K562 (cell line): ENCODE measurements at regions of chr15 and their contacts with region 1.

Region 1: DNA sequence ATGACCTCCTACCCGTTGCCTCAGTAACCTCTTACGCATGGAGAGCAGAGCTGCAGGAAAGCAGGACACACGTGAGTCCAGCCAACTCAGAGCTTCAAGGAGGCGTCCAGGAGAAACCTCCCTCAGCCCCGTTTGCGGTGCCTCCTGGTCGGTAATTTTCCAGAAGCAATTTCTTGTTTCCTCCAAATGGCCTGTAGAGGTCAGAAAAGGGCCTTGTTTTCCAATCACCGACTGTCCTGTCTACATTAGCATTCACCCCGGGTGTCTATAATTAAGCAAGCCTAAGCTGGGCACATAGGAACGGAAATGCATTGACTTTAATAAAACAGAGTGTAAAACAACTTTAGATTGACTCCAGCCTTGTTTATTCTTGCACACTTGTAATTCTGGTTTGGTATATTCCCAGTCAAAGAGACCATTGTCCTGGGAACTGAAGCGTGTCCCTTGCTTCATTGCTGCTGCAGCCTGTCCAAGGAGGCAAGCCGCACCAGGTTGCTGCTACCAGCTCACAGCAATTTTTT is 836.2 kb downstream of the AGBL1 start:
- DNase-seq: peak; percentile 7 to 22 (median 16)
- ATAC-seq: no peak; the same call in 2 of the 3 replicates
- H3K4me3 ChIP-seq: no peak overlapping the region
- H3K27ac ChIP-seq: no peak overlapping the region
- H3K4me1 ChIP-seq: no peaks in the 10 kb centered on the region
- H3K27me3 ChIP-seq: no peaks in the 10 kb centered on the region
- CTCF ChIP-seq: peak in 2 of 3 experiments; percentile 36 to 42; a peak in 2 of 6 replicates
- EP300 ChIP-seq: no peak
- POLR2A ChIP-seq: no peak
- RAD21 ChIP-seq: peak; percentile 33 to 45; a peak in 3 of 4 replicates

Region 2: DNA sequence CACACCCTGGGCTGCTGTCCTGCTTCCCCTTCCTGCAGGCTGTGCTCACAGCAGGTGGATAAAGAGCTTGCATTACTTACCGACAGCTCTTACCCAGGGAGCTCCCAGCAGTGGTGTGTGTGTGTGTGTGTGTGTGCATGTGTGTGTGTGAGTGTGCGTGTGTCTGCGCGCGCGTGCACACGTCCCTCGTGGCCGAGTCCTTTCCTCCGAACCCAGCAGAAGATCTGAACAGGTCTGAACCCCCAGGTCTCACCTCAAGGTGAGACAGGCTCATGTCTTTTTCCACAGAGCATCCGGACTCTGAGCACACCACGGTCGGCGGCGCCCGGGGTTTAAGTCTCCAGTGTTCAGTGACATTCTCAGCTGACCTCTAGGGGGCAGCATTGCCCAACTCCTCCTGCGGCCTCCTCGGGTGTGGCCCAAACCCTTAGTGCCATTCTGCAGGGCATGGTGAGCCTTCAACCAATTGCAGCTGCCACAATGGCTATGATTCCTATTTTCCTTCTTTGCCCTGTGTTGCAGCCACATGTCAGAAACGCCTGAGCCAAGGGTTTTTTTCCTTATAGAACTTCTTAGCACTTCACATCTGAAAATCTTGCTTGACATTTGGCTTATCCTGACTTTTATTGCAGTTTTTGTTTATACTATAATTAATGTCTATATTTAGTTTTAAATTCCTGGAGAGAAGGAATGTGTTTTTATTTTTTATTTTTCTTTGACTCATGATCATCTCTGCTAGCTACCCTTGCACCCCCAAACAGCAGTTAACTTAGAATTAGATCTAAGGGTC is 1057.1 kb before region 1 on chr15:
- CTCF ChIA-PET with region 1: no interaction called
- POLR2A ChIA-PET with region 1: no interaction called
- in situ Hi-C with region 1: no loop called
- intact Hi-C with region 1: loop called (anchors 10 kb)
- DNase-seq: peak; percentile 71 to 79 (median 78)
- ATAC-seq: peak; percentile 99
- H3K4me3 ChIP-seq: no peak overlapping the region
- H3K27ac ChIP-seq: no peak overlapping the region
- H3K4me1 ChIP-seq: no peaks in the 10 kb centered on the region
- H3K27me3 ChIP-seq: no peaks in the 10 kb centered on the region
- CTCF ChIP-seq: peak; percentile 74 to 78 (median 76)
- EP300 ChIP-seq: no peak
- POLR2A ChIP-seq: no peak
- RAD21 ChIP-seq: peak; percentile 27 to 73

Region 3: GRCh38 chr15:86948517-86949118 is 32.7 kb after region 1 on chr15:
- CTCF ChIA-PET with region 1: no interaction called
- POLR2A ChIA-PET with region 1: no interaction called
- in situ Hi-C with region 1: no loop called
- intact Hi-C with region 1: no loop called
- DNase-seq: no peak
- ATAC-seq: no peak
- H3K4me3 ChIP-seq: no peak overlapping the region
- H3K27ac ChIP-seq: no peak overlapping the region
- H3K4me1 ChIP-seq: no peaks in the 10 kb centered on the region
- H3K27me3 ChIP-seq: no peaks in the 10 kb centered on the region
- CTCF ChIP-seq: no peak
- EP300 ChIP-seq: no peak
- POLR2A ChIP-seq: no peak
- RAD21 ChIP-seq: no peak

Region 4: GRCh38 chr15:87033056-87033455 is 117.2 kb after region 1 on chr15:
- CTCF ChIA-PET with region 1: no interaction called
- POLR2A ChIA-PET with region 1: no interaction called
- in situ Hi-C with region 1: no loop called
- intact Hi-C with region 1: no loop called
- DNase-seq: no peak
- ATAC-seq: no peak
- H3K4me3 ChIP-seq: no peak overlapping the region
- H3K27ac ChIP-seq: no peak overlapping the region
- H3K4me1 ChIP-seq: no peaks in the 10 kb centered on the region
- H3K27me3 ChIP-seq: no peaks in the 10 kb centered on the region
- CTCF ChIP-seq: no peak
- EP300 ChIP-seq: no peak
- POLR2A ChIP-seq: no peak
- RAD21 ChIP-seq: no peak

Region 5: GRCh38 chr15:88246666-88247446 is 1331.0 kb after region 1 on chr15:
- CTCF ChIA-PET with region 1: no interaction called
- POLR2A ChIA-PET with region 1: no interaction called
- in situ Hi-C with region 1: loop called (anchors 25 kb)
- intact Hi-C with region 1: loop called (anchors 10 kb)
- DNase-seq: peak; percentile 76 to 87 (median 79)
- ATAC-seq: peak; percentile 98
- H3K4me3 ChIP-seq: no peak overlapping the region
- H3K27ac ChIP-seq: no peak overlapping the region
- H3K4me1 ChIP-seq: no peaks in the 10 kb centered on the region
- H3K27me3 ChIP-seq: no peaks in the 10 kb centered on the region; a peak in 1 of 5 replicates
- CTCF ChIP-seq: peak; percentile 86 to 93 (median 92)
- EP300 ChIP-seq: no peak
- POLR2A ChIP-seq: no peak
- RAD21 ChIP-seq: peak; percentile 67 to 80

Region 6: DNA sequence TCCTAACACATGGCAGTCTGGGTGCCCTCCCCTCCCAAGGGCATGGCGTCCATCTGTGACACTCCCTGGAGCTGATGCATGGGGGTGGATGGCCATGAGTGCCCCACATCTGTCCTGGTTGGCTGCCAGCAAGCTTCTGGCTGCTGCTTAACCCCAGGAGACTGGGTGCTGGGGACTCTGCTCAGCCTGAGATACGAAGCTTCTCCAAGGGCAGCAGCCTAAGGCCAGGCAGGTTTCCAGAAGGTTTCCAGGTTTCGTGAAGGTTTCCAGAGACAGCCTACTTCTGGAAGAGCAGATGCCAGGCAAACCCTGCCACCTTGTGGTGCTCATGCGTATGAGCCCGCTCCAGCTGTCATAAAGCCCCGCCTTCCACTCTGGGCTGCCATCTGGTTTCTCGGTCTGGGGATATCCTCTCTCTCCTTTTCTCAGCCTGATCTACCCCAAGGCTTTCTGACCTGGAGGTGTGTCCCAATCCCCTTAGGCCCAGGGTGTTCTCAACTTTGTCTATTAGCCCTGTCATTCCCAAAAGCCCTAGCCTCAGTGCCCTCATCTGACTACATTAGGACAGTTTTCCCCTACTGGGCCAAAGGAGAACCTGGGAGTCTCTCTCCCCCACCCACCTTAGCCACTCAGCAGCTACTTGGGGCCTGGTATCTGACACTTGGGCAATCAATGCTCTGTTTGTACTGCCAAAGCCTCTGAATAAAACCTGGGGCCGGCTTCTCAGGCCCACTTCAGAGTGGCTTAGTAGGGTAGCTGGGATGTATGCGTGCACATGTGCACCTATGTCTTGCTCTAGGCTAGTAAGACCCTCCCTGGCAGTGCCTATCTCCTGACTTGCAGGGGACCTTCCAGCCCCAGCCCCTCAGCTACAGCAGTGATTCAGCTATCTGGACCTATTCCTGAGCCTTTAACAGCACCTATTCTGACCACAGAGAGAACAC is 1539.3 kb after region 1 on chr15:
- CTCF ChIA-PET with region 1: no interaction called
- POLR2A ChIA-PET with region 1: no interaction called
- in situ Hi-C with region 1: no loop called
- intact Hi-C with region 1: loop called (anchors 5 kb)
- DNase-seq: peak; percentile 57 to 64 (median 60)
- ATAC-seq: peak; percentile 90
- H3K4me3 ChIP-seq: no peak overlapping the region
- H3K27ac ChIP-seq: no peak overlapping the region
- H3K4me1 ChIP-seq: no peaks in the 10 kb centered on the region; a peak in 1 of 5 replicates
- H3K27me3 ChIP-seq: peaks cover 4 to 6% of the 10 kb centered on the region in 2 experiments; a peak in 2 of 5 replicates
- CTCF ChIP-seq: peak; percentile 69 to 74 (median 73)
- EP300 ChIP-seq: no peak
- POLR2A ChIP-seq: no peak
- RAD21 ChIP-seq: peak; percentile 14 to 54; a peak in 3 of 4 replicates